Activated T-helper 2 cell treated with anti-CD3 and anti-CD28 coated beads, Interferon-gamma antibody, Interleukin-2, Interleukin-4, amounts not matched to agents 10 μg/mL and 5 μg/mL and 100 μg/mL, durations not matched to agents 14 hours and 24 hours and 36 hours (primary cell): ENCODE measurements at regions of chr2 and their contacts with region 1.

Region 1: GRCh38 chr2:27977608-27978312 is 87.2 kb downstream of the BABAM2 start:
- DNase-seq: no peak
- H3K4me3 Mint-ChIP-seq: no peak overlapping the region
- H3K27ac Mint-ChIP-seq: peak overlapping the region; percentile 90
- H3K4me1 Mint-ChIP-seq: peaks cover 40% of the 10 kb centered on the region
- H3K27me3 Mint-ChIP-seq: no peaks in the 10 kb centered on the region

Region 2: DNA sequence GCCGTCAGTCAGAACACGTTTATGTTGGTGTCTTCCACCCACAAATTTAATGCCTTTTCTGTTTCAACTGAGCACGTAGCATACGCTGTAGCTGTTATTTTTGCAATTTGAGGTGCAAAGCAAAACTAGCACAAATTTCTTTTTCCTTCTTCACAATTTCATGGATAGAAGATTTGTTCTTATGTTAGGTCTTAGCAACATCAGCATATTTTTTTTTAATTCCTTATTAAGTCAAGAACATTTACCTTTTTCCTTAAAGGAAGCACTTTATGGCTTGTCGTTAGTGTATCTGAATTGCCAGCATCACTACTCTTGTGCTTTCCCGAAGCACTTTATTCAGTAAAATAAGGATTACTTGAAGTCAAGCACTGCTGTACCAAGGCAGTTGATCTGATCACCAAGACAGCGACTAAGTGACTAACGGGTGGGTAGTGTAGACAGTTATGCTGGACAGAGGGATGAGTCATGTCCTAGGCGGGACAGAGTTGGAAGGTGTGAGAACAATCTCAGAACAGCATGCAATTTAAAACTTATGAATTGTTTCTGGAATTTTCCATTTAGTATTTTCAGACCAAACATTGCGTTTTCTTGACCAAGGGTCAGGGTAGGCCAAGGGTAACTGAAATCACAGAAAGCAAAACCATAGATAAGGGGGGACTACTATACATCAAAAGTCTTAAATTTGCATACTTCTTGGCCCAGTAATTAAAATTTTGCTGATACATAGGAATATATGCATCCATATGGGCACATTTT is 73.9 kb before region 1 on chr2:
- intact Hi-C with region 1: loop called (anchors 5 kb)
- DNase-seq: no peak
- H3K4me3 Mint-ChIP-seq: no peak overlapping the region
- H3K27ac Mint-ChIP-seq: peak overlapping the region; percentile 1
- H3K4me1 Mint-ChIP-seq: peaks cover 63% of the 10 kb centered on the region
- H3K27me3 Mint-ChIP-seq: no peaks in the 10 kb centered on the region

Region 3: GRCh38 chr2:27960237-27960912 is 17.4 kb before region 1 on chr2:
- intact Hi-C with region 1: loop called (anchors 2 kb)
- DNase-seq: peak; percentile 21
- H3K4me3 Mint-ChIP-seq: peak overlapping the region; percentile 27
- H3K27ac Mint-ChIP-seq: peak overlapping the region; percentile 83
- H3K4me1 Mint-ChIP-seq: peaks cover 69% of the 10 kb centered on the region
- H3K27me3 Mint-ChIP-seq: no peaks in the 10 kb centered on the region

Region 4: DNA sequence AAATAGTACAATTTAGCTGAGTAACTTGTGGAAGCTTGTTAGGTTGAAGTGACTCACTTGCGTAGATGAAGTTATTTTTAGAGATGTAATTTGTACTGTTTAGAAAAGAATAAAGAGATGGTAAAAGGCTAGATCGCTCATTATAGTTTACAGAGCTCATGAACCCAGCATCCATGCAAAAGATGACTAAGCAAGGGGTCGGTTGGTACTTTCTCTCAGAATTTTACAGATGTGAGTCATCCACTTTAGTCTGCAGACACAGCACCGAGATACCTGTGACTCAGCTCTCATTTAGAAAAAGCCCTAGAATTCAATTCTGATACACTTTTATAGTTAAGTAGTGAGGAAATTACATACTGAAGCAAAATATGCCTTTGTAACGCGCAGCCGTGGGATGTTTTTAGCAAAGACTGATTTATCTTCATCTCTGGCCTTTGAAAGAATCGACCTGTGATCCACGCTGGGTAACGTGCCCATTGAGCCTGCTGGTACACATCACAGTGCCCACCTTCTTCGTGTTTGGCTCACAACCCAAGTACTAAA is 298.4 kb after region 1 on chr2:
- intact Hi-C with region 1: loop called (anchors 5 kb)
- DNase-seq: no peak
- H3K4me3 Mint-ChIP-seq: no peak overlapping the region
- H3K27ac Mint-ChIP-seq: peak overlapping the region; percentile 41
- H3K4me1 Mint-ChIP-seq: peaks cover 48% of the 10 kb centered on the region
- H3K27me3 Mint-ChIP-seq: no peaks in the 10 kb centered on the region